HEK293 (cell line): ENCODE measurements at regions of chr9 and their contacts with region 1.

Region 1: GRCh38 chr9:136129176-136129575 is 10.5 kb upstream of the TMEM250 start:
- H3K4me3 ChIP-seq: no peak overlapping the region
- H3K27ac ChIP-seq: no peak overlapping the region
- H3K4me1 ChIP-seq: no peaks in the 10 kb centered on the region
- CTCF ChIP-seq: no peak

Region 2: GRCh38 chr9:135961277-135961705 is 167.9 kb before region 1 on chr9 and contains the start of gene UBAC1:
- CTCF ChIA-PET with region 1: interaction called, 95 read pairs
- POLR2A ChIA-PET with region 1: interaction called, 10 read pairs
- H3K4me3 ChIP-seq: peak within 1 kb of the TSS; percentile 86
- H3K27ac ChIP-seq: peak within 1 kb of the TSS; percentile 47; the same call in 1 of the 2 replicates
- H3K4me1 ChIP-seq: no peaks in the 10 kb centered on the region
- CTCF ChIP-seq: peak; percentile 94

Region 3: DNA sequence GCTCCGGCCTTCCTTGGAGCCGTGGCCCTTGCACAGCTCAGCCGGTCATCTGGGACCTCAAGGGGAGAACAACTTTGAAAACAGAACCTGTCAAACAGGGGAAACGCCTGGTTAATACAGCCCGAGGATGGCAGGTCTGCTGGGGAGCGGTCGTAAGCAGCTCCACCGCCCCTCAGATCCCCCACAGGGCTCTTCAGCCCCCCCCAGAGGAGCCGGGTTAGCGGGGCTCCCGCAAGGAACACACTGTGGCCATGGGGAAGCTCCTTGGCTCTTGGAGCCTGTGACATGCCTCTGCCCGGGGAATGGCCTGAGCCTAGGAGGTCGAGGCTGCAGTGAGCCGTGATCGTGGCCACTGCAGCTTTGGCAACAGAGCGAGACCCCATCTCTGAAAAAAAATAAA is 17.3 kb before region 1 on chr9:
- CTCF ChIA-PET with region 1: no interaction called
- POLR2A ChIA-PET with region 1: no interaction called
- H3K4me3 ChIP-seq: no peak overlapping the region
- H3K27ac ChIP-seq: no peak overlapping the region
- H3K4me1 ChIP-seq: peaks cover 8% of the 10 kb centered on the region; the same call in 1 of the 2 replicates
- CTCF ChIP-seq: no peak